HEK293T (cell line): ENCODE measurements at regions of chr2 and their contacts with region 1.

Region 1: GRCh38 chr2:111134055-111134454 is 13.3 kb downstream of the BCL2L11 start:
- DNase-seq: no peak

Region 2: DNA sequence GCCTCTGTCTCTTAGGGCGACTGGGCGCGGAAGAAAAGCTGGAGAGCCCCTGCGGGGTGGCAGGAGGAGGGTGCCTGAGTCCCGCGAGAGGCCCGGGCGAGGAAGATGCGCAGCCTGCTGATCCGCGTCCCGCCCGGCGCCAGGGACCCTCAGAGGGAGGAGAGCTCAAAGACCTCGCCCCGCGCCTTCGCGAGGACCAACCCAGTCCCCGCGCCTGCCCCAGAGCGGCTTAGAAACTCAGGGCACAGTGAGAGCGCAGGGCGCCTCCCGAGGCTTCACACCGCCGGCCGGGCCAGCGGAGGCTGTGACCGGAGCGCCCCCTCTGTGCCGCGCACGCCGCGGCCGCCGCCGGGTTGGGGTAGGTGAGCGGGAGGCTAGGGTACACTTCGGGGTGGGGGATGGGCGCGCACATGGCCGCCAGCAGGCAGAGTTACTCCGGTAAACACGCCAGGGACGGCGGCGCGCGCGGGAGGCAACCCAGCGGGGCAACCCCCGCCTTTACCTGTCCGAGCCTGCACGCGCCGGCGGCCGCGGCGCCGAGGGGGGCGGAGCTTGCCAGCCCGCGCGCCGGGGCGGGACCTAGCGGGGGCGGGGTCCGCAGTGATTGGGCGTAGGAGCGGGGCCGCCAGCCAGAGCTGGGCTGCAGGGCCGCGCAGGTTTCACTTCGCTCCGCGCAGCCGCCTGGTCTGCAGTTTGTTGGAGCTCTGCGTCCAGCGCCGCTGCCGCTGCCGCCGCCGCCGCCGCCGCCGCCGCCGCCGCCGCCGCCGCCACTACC is 13.6 kb before region 1 on chr2 and contains the start of gene BCL2L11:
- CTCF ChIA-PET with region 1: no interaction called
- POLR2A ChIA-PET with region 1: no interaction called
- DNase-seq: peak; percentile 91

Region 3: DNA sequence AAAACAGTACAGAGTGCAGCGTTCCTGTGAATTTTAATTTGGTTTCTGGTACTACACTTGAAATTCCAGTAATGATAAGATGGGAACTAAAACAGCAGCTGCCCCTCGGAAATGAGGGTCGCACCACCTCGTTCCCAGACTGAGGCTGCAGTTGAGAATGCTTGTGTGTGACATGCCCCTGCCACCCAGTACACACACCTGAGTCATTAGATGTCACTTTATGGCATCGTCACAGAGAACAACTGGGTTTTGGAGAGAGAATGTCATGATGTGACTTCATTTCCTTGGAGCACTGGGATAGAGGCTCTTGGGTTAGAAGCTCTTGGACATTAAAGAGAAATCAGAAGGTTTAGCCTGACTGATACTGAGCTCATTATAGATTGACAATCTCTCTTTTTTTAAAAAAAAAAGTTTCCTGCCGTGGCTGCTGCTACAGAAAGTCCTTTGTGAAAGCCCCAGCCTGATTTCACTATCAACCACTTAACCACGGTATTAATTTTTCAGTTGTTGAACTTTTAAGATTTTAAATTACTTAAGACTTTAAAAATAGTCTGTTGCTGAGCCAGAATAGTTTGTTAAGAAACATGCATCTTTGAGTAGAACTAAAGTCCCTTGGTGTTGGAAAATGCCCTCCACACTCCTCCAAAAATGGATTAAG is 11.2 kb after region 1 on chr2:
- CTCF ChIA-PET with region 1: interaction called, 13 read pairs
- POLR2A ChIA-PET with region 1: no interaction called
- DNase-seq: no peak